Activated CD4-positive, alpha-beta T cell treated with anti-CD3 and anti-CD28 coated beads, Interleukin-2, amount 10 ng/mL, durations not matched to agents 24 days and 14 days (primary cell): ENCODE measurements at regions of chr3 and their contacts with region 1.

Region 1: DNA sequence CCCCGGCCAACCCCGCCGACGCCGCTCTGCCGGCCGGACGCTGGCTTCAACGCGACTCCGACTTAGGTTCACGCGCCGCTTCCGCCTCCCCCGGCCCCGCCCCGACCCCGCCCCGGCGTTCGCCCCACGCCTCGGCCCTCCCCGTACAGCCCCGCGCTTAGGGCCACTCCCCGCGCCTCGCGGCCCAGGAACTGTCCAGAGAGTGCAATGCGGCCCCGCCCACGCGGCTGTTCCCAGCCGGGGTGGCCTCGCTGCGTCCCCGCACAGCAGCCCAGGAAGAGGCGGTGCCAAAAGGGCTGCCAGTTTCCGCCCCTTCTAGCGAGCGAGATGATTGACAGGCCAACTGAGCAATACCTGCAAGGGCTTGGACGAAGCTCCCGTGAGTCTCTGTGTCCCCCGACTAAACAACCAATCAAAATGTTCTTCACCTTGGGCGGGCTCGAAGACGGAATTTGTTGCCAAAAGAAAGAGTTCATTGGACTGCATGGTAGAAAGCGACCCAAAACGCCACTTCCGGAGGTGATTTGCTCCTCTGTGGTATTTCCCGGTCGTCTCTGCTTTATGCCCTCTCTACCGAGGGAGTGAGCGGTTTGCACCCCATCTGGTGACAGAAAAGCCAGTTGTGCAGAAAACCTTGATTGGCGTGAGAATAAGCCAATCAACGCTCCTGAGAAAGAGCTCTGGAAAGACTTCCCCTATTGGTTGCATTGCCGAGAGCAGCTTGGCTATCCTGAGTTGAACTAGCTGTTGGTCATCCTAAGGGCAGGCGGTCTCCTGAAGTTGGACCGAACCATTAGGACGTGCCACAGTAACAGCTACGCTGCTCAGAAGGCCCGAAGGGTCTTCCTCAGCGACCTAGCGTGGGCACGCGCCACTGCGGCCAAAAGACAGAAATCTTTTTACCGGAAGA is at the start of gene UBP1:
- DNase-seq: peak; percentile 100
- H3K4me3 Mint-ChIP-seq: peak within 1 kb of the TSS; percentile 98
- H3K27ac Mint-ChIP-seq: peak within 1 kb of the TSS; percentile 100
- H3K4me1 Mint-ChIP-seq: peaks cover 36% of the 10 kb centered on the region
- H3K27me3 Mint-ChIP-seq: no peaks in the 10 kb centered on the region
- total RNA-seq, gene UBP1: 72.1 and 74.1 TPM in 2 replicates

Region 2: DNA sequence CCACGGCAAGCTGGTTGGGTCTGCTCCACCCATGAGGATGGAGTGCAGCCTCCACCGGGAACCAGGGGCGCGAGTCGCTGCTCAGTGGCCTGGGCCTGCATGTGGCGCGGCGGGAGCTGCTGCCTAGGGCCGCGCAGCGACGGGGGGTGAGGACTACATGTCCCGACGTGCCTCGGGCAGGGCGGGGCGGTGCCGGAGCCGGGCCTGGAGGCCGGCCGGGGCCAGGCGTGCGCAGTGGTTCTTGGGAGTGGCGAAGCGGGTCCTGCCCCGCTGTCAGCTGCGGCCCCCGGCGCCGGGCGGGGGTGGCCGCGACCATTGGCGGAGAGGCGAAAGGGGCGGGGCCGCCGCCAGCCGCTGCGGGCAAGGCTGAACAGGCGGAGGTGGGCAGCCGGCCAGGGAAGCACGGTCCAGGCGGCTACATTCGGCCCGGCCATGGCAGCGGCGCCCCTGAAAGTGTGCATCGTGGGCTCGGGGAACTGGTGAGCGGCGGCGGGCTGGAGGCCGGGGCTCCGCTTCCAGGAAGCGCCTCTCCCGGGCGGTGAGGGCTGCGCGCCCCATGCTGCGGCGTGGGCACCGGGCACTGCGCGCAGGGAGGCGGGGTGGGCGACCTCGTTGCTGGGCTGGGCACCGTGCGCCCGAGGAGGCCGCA is 1334.2 kb before region 1 on chr3 and contains the start of gene GPD1L:
- intact Hi-C with region 1: loop called (anchors 5 kb)
- DNase-seq: peak; percentile 98
- H3K4me3 Mint-ChIP-seq: peak within 1 kb of the TSS; percentile 94
- H3K27ac Mint-ChIP-seq: peak within 1 kb of the TSS; percentile 90
- H3K4me1 Mint-ChIP-seq: peaks cover 32% of the 10 kb centered on the region
- H3K27me3 Mint-ChIP-seq: no peaks in the 10 kb centered on the region
- total RNA-seq, gene GPD1L: 19.0 and 20.0 TPM in 2 replicates

Region 3: GRCh38 chr3:32684800-32685542 is 755.6 kb before region 1 on chr3 and contains the start of gene CNOT10:
- intact Hi-C with region 1: loop called (anchors 1 kb)
- DNase-seq: peak; percentile 99
- H3K4me3 Mint-ChIP-seq: peak within 1 kb of the TSS; percentile 95
- H3K27ac Mint-ChIP-seq: peak within 1 kb of the TSS; percentile 96
- H3K4me1 Mint-ChIP-seq: peaks cover 27% of the 10 kb centered on the region
- H3K27me3 Mint-ChIP-seq: no peaks in the 10 kb centered on the region
- total RNA-seq, gene CNOT10: 61.0 and 74.4 TPM in 2 replicates

Region 4: GRCh38 chr3:33385423-33385822 is 55.2 kb before region 1 on chr3:
- intact Hi-C with region 1: loop called (anchors 5 kb)
- DNase-seq: peak; percentile 83
- H3K4me3 Mint-ChIP-seq: no peak overlapping the region
- H3K27ac Mint-ChIP-seq: peak overlapping the region; percentile 51
- H3K4me1 Mint-ChIP-seq: peaks cover 22% of the 10 kb centered on the region
- H3K27me3 Mint-ChIP-seq: no peaks in the 10 kb centered on the region

Region 5: GRCh38 chr3:33474895-33475294 is 34.3 kb after region 1 on chr3:
- intact Hi-C with region 1: loop called (anchors 1 kb)
- DNase-seq: no peak
- H3K4me3 Mint-ChIP-seq: no peak overlapping the region
- H3K27ac Mint-ChIP-seq: no peak overlapping the region
- H3K4me1 Mint-ChIP-seq: no peaks in the 10 kb centered on the region
- H3K27me3 Mint-ChIP-seq: no peaks in the 10 kb centered on the region

Region 6: GRCh38 chr3:33717866-33718594 is 277.5 kb after region 1 on chr3 and contains the start of gene CLASP2:
- intact Hi-C with region 1: loop called (anchors 1 kb)
- DNase-seq: peak; percentile 96
- H3K4me3 Mint-ChIP-seq: no peak within 1 kb of the TSS
- H3K27ac Mint-ChIP-seq: peak within 1 kb of the TSS; percentile 88
- H3K4me1 Mint-ChIP-seq: peaks cover 12% of the 10 kb centered on the region
- H3K27me3 Mint-ChIP-seq: peaks cover 6% of the 10 kb centered on the region
- total RNA-seq, gene CLASP2: 65.3 and 65.8 TPM in 2 replicates